CD4-positive, alpha-beta T cell (primary cell): ENCODE measurements at regions of chr4 and their contacts with region 1.

Region 1: DNA sequence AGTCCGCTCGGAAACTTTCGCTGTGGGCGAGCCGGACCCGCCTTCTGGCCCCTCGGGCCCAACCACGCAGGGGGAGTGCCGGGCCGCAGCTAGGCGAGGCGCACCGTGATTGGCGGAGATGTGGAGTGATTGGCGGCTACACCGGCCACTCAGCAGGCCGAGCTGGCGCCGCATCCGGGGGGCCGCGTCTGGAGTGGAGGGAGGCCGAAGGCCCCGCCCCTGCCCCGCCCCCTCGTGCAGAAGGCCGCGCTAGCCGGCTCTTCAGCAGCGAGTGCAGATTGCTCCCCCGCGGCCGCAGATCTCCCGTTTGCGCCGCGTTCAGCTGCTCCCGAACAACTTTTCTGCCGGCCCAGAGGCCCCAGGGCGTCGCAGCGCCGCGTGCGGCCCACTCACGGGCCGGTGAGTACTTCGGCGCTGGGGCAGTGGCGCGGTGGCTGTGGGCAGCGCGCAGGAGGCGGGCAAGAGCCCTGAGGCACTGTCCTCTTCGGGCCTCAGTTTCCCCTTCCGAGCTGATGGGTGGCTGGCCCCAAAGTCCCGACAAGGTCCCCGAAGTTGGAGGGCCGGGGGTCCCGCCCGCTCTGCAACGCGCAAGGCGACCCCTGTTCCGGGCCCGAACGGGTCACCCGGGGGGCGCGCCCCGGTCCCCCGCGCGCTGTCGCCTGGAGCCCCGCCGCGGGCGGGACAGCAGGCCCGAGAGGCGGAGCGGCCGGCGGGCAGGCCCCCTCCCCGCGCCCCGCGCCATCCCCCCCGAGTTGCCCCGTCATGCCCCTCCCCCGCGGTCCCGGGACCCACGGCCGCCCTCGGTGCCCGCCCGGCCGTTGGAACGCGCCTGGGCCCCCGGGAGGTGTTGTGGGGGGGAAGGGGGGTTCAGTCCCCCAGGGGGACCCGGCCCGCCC is at the start of gene WFS1:
- DNase-seq: peak; percentile 89 to 99 (median 98)
- ATAC-seq: peak; percentile 99
- H3K4me3 ChIP-seq: peak within 1 kb of the TSS; percentile 64
- H3K4me3 Mint-ChIP-seq: peak within 1 kb of the TSS; percentile 92
- H3K27ac ChIP-seq: no peak within 1 kb of the TSS
- H3K27ac Mint-ChIP-seq: peak within 1 kb of the TSS; percentile 28
- H3K4me1 ChIP-seq: peaks cover 23% of the 10 kb centered on the region
- H3K4me1 Mint-ChIP-seq: peaks cover 16% of the 10 kb centered on the region
- H3K27me3 ChIP-seq: no peaks in the 10 kb centered on the region
- H3K27me3 Mint-ChIP-seq: no peaks in the 10 kb centered on the region
- CTCF ChIP-seq: no peak
- total RNA-seq, gene WFS1: 1.3 to 1.7 TPM

Region 2: DNA sequence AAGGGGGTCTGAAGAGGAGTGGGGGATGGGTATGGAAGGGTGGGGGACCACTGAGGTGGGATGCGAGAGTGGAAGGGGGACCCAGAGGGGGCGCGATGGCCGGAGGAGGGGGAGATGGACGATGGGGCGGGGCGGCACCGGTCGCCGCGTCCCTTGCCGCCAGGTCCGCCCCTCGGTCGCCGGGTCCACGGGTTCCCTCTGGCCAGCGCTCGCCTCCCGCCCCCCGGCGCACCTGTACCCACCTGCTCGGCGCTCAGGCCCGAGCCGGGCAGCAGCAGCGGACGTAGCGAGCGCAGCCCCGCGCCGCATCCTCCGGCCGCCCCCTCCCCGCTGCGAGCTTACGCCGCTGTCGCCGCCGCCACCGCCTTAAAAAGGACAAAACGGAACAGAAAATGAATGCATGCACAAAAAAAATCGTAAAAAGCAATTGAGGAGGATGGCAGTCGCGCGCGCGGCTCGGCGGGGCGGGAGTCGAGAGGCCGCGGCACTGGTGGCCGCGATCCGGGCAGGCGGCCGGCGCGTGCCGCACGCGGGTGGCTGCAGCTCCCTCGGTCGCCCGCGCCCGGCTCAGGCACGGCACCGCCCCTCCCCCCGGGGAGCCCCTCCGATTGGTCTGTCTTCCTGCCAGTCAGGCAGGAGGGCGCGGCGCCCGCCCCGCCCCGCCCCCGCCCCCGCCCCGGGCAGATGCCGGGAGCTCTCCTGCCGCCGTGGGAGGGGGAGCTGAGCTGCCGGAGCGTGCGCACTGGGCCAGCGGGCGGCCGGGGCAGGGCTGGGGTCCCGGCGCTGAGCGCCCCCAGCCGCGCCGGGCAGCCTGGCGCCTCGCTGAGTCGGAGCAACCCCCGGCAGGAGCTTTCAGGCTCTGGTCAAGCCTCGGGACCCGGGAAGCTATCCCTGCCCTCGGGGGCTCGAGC is 69.6 kb before region 1 on chr4 and contains the start of gene JAKMIP1:
- CTCF ChIA-PET with region 1: no interaction called
- POLR2A ChIA-PET with region 1: interaction called, 6 read pairs
- intact Hi-C with region 1: loop called in 1 of 2 experiments (anchors 5 kb)
- DNase-seq: peak; percentile 69 to 92 (median 78)
- ATAC-seq: peak; percentile 85
- H3K4me3 ChIP-seq: peak within 1 kb of the TSS; percentile 57
- H3K4me3 Mint-ChIP-seq: peak within 1 kb of the TSS; percentile 86
- H3K27ac ChIP-seq: no peak within 1 kb of the TSS
- H3K27ac Mint-ChIP-seq: peak within 1 kb of the TSS; percentile 33
- H3K4me1 ChIP-seq: peaks cover 39% of the 10 kb centered on the region
- H3K4me1 Mint-ChIP-seq: peaks cover 21% of the 10 kb centered on the region
- H3K27me3 ChIP-seq: peaks cover 15 to 21% of the 10 kb centered on the region in 2 experiments
- H3K27me3 Mint-ChIP-seq: peaks cover 63% of the 10 kb centered on the region
- CTCF ChIP-seq: no peak
- total RNA-seq, gene JAKMIP1: 2.0 to 2.1 TPM

Region 3: GRCh38 chr4:6282314-6282771 is 12.5 kb after region 1 on chr4:
- CTCF ChIA-PET with region 1: no interaction called
- POLR2A ChIA-PET with region 1: no interaction called
- intact Hi-C with region 1: no loop called
- DNase-seq: no peak
- ATAC-seq: no peak
- H3K4me3 ChIP-seq: no peak overlapping the region
- H3K4me3 Mint-ChIP-seq: no peak overlapping the region
- H3K27ac ChIP-seq: no peak overlapping the region
- H3K27ac Mint-ChIP-seq: no peak overlapping the region
- H3K4me1 ChIP-seq: peaks cover 16% of the 10 kb centered on the region
- H3K4me1 Mint-ChIP-seq: peaks cover 12% of the 10 kb centered on the region
- H3K27me3 ChIP-seq: no peaks in the 10 kb centered on the region
- H3K27me3 Mint-ChIP-seq: no peaks in the 10 kb centered on the region
- CTCF ChIP-seq: no peak

Region 4: DNA sequence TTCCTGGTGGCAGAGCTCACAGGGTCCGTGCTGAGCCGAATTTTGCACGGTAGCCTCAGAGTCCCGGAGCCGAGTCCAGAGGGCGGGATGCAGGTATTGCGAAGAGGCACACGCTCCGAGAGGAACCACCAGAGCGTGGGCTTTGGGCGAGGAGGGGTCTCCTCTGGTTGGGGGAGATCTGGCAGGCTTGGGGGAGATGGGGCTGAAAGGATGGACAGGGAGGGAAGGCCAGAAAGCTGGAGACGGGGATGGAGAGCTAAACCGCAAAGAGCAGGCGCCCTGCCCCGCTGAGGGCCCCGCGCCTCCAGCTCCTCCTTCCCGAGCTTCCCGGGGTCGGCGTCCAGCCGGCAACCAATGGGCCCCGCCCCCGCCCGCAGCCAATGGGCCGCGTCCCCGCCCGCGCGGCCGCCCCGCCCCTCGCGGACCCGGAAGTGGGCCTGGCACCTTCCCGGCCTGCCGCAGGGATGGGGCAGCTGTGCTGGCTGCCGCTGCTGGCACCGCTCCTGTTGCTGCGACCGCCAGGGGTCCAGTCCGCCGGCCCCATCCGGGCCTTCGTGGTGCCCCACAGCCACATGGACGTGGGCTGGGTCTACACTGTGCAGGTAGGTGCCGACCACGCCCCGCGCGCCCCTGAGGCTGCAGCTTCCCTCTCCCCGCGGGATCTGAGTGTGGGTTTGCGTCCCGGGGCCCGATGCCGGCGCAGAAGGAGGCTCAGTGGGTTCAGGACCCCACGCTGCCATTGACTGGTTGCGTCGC is 305.1 kb after region 1 on chr4 and contains the start of gene MAN2B2:
- CTCF ChIA-PET with region 1: no interaction called
- POLR2A ChIA-PET with region 1: interaction called, 3 read pairs
- intact Hi-C with region 1: loop called in 1 of 2 experiments (anchors 2 kb)
- DNase-seq: peak; percentile 51 to 89 (median 80)
- ATAC-seq: peak; percentile 93
- H3K4me3 ChIP-seq: peak within 1 kb of the TSS; percentile 98
- H3K4me3 Mint-ChIP-seq: peak within 1 kb of the TSS; percentile 93
- H3K27ac ChIP-seq: peak within 1 kb of the TSS; percentile 55 to 74
- H3K27ac Mint-ChIP-seq: peak within 1 kb of the TSS; percentile 79
- H3K4me1 ChIP-seq: peaks cover 30% of the 10 kb centered on the region
- H3K4me1 Mint-ChIP-seq: peaks cover 4% of the 10 kb centered on the region
- H3K27me3 ChIP-seq: no peaks in the 10 kb centered on the region
- H3K27me3 Mint-ChIP-seq: no peaks in the 10 kb centered on the region
- CTCF ChIP-seq: no peak
- total RNA-seq, gene MAN2B2: 25.9 to 28.5 TPM

Region 5: DNA sequence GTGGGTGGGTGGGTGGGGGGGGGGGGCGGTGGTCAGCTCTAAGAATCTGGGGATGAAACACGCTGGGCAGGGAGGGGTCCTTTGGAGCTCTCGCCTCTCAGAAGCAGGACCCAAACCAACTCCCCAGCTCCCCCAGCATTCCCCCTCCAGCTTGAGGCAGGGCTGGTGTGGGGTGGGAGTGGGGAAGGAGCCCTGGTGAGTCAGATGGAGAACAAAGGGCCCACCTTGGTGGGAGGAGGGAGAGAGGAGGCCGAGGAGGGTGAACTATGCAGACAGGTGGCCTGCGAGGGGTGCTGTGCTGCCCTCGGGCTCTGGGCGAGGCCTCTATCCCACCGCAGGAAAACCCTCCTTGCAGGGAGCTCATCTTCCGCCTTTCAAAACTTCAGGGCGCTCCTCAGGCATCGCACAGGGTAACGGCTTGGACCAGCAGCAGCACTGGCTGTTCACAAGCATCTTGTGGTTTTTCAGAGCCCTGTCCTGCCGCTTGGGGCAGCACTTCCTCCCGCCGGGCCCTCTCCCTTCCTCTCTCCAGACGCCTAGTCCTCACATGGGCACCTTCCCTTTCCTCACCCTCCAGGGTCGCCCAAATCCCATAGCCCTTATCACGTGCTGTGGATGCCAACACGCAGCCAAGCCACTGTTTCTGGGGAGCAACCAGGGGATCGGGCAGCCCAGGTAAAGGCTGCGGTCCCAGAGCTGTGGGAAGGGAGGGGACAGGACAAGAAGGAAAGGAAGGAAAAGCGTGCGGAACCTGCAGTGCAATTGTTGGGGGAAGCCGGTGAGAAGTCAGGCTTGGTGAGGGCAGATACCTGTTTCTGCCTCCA is 832.0 kb after region 1 on chr4:
- CTCF ChIA-PET with region 1: no interaction called
- POLR2A ChIA-PET with region 1: no interaction called
- intact Hi-C with region 1: loop called in 1 of 2 experiments (anchors 10 kb)
- DNase-seq: peak; percentile 18 to 73 (median 44)
- ATAC-seq: peak; percentile 35
- H3K4me3 ChIP-seq: peak overlapping the region; percentile 84
- H3K4me3 Mint-ChIP-seq: peak overlapping the region; percentile 84
- H3K27ac ChIP-seq: no peak overlapping the region
- H3K27ac Mint-ChIP-seq: peak overlapping the region; percentile 7
- H3K4me1 ChIP-seq: peaks cover 29% of the 10 kb centered on the region
- H3K4me1 Mint-ChIP-seq: peaks cover 16% of the 10 kb centered on the region
- H3K27me3 ChIP-seq: no peaks in the 10 kb centered on the region
- H3K27me3 Mint-ChIP-seq: no peaks in the 10 kb centered on the region
- CTCF ChIP-seq: peak; percentile 55